IMR-90 (cell line): ENCODE measurements at regions of chr1 and their contacts with region 1.

Region 1: GRCh38 chr1:46396441-46397398 is 2.6 kb downstream of the FAAH start:
- DNase-seq: peak; percentile 17
- ATAC-seq: no peak
- H3K4me3 ChIP-seq: no peak overlapping the region
- H3K27ac ChIP-seq: no peak overlapping the region
- H3K4me1 ChIP-seq: no peaks in the 10 kb centered on the region; the same call in 1 of the 2 replicates
- H3K27me3 ChIP-seq: peaks cover 57% of the 10 kb centered on the region
- CTCF ChIP-seq: no peak
- POLR2A ChIP-seq: no peak
- RAD21 ChIP-seq: no peak

Region 2: DNA sequence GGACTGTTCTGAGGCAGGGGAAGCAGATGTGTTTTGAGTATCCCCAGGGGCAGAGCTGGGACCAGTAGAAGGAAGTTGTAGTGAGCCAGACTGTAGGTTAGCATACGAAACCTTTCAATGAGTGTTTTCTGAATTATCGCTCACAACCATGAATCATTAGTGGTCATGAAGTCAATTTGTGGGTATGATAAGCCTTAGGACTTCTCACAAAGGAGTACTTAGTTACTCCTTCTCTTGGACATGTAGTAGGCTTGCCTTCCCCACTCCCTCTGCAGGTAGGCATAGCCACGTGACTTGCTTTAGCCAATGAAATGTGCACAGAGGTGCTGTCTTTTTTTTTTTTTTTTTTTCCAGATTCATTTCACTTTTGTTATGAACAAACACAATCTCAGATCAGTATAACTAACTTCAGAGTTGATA is 26.5 kb before region 1 on chr1:
- CTCF ChIA-PET with region 1: no interaction called
- POLR2A ChIA-PET with region 1: no interaction called
- dilution Hi-C with region 1: no loop called
- in situ Hi-C with region 1: no loop called
- intact Hi-C with region 1: loop called (anchors 1 kb)
- DNase-seq: peak; percentile 45
- ATAC-seq: no peak
- H3K4me3 ChIP-seq: no peak overlapping the region
- H3K27ac ChIP-seq: no peak overlapping the region
- H3K4me1 ChIP-seq: no peaks in the 10 kb centered on the region
- H3K27me3 ChIP-seq: no peaks in the 10 kb centered on the region
- CTCF ChIP-seq: no peak
- POLR2A ChIP-seq: no peak
- RAD21 ChIP-seq: no peak